Activated CD4-positive, alpha-beta memory T cell treated with anti-CD3 and anti-CD28 coated beads for 36 hours (primary cell): ENCODE measurements at regions of chr20 and their contacts with region 1.

Region 1: GRCh38 chr20:2451939-2452732 is 18.5 kb downstream of the SNRPB start:
- DNase-seq: peak; percentile 77
- H3K4me3 Mint-ChIP-seq: no peak overlapping the region
- H3K27ac Mint-ChIP-seq: no peak overlapping the region
- H3K4me1 Mint-ChIP-seq: peaks cover 35% of the 10 kb centered on the region
- H3K27me3 Mint-ChIP-seq: no peaks in the 10 kb centered on the region

Region 2: GRCh38 chr20:1562622-1563021 is 889.5 kb before region 1 on chr20:
- CTCF ChIA-PET with region 1: no interaction called
- POLR2A ChIA-PET with region 1: no interaction called
- intact Hi-C with region 1: loop called (anchors 5 kb)
- DNase-seq: no peak
- H3K4me3 Mint-ChIP-seq: no peak overlapping the region
- H3K27ac Mint-ChIP-seq: no peak overlapping the region
- H3K4me1 Mint-ChIP-seq: no peaks in the 10 kb centered on the region
- H3K27me3 Mint-ChIP-seq: no peaks in the 10 kb centered on the region

Region 3: DNA sequence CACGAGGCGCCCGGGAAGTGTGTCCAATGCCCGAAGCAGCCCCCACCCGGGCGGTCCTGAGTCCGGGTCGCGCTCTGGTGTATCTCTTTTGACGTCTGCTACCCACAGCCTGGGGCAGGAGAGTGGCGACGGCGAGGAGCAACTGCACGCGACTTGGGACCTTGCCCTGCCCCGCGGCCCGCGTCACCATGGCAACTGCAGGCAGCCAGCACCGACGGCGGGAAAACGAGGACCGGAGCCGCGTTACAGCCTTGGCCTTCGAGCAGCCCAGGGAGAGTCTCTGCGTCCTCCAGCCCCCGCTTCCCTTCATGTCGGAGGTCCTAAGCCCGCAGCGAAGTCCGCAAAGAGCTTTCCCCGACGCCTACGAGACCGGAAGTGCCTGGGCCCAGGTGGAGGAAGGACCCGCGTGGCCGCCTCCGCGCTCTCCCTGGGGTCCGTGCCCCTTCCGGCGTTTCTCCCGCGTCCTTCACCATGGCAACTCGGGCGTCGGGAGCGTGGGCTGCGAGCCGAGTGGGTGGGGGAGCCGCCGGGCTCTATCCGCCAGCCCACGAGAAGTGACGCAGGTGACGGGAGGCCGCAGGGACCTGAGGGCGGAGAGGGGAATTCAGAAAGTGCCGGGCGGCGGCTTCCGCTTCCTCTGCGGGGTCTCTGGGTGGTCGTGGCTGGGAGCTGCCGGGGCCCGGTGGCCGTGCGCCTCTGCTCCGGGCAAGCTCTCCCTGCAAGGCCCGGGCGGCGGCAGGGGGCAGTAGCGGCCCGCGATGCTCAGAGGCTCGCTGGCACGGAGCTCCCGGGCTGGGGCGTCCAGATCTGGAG is 245.0 kb before region 1 on chr20:
- CTCF ChIA-PET with region 1: interaction called, 43 read pairs
- POLR2A ChIA-PET with region 1: no interaction called
- intact Hi-C with region 1: loop called (anchors 5 kb)
- DNase-seq: peak; percentile 77
- H3K4me3 Mint-ChIP-seq: peak overlapping the region; percentile 74
- H3K27ac Mint-ChIP-seq: no peak overlapping the region
- H3K4me1 Mint-ChIP-seq: peaks cover 7% of the 10 kb centered on the region
- H3K27me3 Mint-ChIP-seq: peaks cover 7% of the 10 kb centered on the region

Region 4: DNA sequence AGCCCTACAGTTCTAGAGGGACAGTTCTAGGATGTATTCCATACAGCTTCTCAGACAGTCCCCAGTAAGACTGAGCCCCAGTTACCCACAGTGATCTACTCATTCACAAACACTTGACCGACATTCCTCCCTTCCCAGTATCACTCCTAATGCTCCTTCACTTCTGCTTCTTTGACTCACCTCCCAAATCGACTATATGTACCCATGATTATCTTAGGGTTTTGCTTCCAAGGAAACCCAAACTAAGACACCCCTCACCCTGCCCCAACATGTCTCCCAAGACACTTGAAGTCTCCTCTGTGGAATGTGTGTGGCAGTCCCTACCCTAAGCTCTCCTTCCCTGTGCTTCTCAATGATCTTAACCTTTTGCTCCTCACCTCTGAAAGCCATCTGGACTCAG is 95.0 kb before region 1 on chr20:
- CTCF ChIA-PET with region 1: interaction called, 10 read pairs
- POLR2A ChIA-PET with region 1: no interaction called
- intact Hi-C with region 1: no loop called
- DNase-seq: no peak
- H3K4me3 Mint-ChIP-seq: no peak overlapping the region
- H3K27ac Mint-ChIP-seq: no peak overlapping the region
- H3K4me1 Mint-ChIP-seq: peaks cover 2% of the 10 kb centered on the region
- H3K27me3 Mint-ChIP-seq: peaks cover 8% of the 10 kb centered on the region

Region 5: GRCh38 chr20:2387180-2387577 is 65.0 kb before region 1 on chr20:
- CTCF ChIA-PET with region 1: interaction called, 46 read pairs
- POLR2A ChIA-PET with region 1: interaction called, 3 read pairs
- intact Hi-C with region 1: loop called (anchors 2 kb)
- DNase-seq: peak; percentile 79
- H3K4me3 Mint-ChIP-seq: no peak overlapping the region
- H3K27ac Mint-ChIP-seq: no peak overlapping the region
- H3K4me1 Mint-ChIP-seq: peaks cover 10% of the 10 kb centered on the region
- H3K27me3 Mint-ChIP-seq: peaks cover 3% of the 10 kb centered on the region